Activated CD4-positive, alpha-beta memory T cell treated with anti-CD3 and anti-CD28 coated beads for 36 hours (primary cell): ENCODE measurements at regions of chr6 and their contacts with region 1.

Region 1: DNA sequence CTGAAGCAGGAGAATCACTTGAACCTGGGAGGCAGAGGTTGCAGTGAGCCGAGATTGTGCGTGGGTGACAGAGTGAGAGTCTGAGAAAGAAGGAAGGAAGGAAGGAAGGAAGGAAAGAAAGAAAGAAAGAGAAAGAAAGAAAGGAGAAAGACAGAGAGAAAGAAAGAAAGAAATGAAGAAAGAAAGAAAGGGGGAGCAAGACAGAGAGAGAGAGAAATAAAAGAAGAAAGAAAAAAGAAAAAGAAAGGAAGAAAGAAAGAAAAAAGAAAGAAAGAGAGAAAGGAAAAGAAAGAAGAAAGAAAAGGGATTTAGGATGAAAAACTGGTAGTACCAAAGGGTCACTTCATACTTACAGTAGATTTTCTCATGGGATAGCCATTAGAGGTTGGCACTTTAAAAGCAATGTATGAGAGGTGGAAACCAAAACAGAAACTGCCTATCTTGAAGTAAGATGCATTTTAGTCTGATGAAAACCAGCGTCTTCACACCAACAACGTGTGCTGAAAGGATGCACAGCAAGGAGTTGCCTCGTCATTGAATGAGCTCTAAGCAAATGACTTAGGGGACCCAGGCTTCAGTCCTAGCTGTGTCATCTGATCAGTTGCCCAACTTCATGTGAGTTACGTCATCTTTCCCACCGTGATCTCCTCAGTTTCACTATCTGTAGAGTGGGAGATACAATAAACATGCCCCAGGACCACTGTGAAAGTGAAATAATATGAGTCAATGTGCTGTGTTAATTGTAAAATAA is 133.9 kb upstream of the NEDD9 start:
- DNase-seq: peak; percentile 72
- H3K4me3 Mint-ChIP-seq: peak overlapping the region; percentile 43
- H3K27ac Mint-ChIP-seq: peak overlapping the region; percentile 77
- H3K4me1 Mint-ChIP-seq: peaks cover 95% of the 10 kb centered on the region
- H3K27me3 Mint-ChIP-seq: no peaks in the 10 kb centered on the region

Region 2: DNA sequence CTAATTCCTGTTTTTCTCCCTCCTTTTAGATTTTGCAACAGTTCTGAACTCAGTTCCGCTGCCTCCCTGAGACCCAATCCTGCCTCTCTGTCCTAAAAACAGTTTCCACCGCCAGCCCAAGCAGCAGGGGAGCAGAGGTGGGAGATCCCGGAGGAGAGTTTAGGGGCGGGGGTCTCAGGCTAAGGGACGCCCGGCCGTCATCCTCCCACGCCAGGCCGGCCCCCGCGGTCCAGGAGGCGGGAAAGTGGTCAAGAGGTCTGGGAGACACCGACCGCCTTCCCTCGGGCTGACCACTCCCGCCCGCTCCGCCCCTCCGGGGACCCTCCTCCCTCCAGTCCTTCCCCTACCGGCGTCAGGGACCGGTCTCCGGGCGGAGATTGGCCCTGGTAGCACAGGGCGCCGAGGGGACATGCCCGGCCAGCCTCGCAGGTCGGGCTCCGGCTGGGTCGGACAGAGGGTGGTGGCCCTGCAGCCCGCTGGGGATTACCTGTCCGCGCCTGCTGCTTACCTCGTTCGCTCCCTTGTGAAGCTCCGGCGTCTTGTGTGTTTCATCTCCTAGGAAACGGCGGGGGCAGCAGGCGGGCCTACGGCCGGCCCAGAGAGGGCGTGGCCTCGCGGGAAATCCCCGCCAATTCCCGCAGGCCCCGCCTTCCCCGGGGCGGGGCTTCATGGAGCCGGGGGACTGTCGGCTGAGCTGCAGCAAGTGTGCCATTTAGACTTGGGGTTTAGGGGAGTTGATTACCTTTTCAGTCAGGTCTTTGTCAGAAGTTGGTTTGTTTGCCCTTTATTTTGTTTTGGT is 528.2 kb before region 1 on chr6 and contains the start of gene MAK:
- CTCF ChIA-PET with region 1: no interaction called
- POLR2A ChIA-PET with region 1: no interaction called
- intact Hi-C with region 1: loop called (anchors 5 kb)
- DNase-seq: peak; percentile 91
- H3K4me3 Mint-ChIP-seq: peak within 1 kb of the TSS; percentile 73
- H3K27ac Mint-ChIP-seq: peak within 1 kb of the TSS; percentile 98
- H3K4me1 Mint-ChIP-seq: peaks cover 31% of the 10 kb centered on the region
- H3K27me3 Mint-ChIP-seq: peaks cover 40% of the 10 kb centered on the region
- total RNA-seq, gene MAK: 0.87 to 1.1 TPM

Region 3: GRCh38 chr6:11218538-11219399 is 147.6 kb before region 1 on chr6:
- CTCF ChIA-PET with region 1: no interaction called
- POLR2A ChIA-PET with region 1: no interaction called
- intact Hi-C with region 1: no loop called
- DNase-seq: peak; percentile 55
- H3K4me3 Mint-ChIP-seq: no peak overlapping the region
- H3K27ac Mint-ChIP-seq: no peak overlapping the region
- H3K4me1 Mint-ChIP-seq: peaks cover 53% of the 10 kb centered on the region
- H3K27me3 Mint-ChIP-seq: no peaks in the 10 kb centered on the region

Region 4: DNA sequence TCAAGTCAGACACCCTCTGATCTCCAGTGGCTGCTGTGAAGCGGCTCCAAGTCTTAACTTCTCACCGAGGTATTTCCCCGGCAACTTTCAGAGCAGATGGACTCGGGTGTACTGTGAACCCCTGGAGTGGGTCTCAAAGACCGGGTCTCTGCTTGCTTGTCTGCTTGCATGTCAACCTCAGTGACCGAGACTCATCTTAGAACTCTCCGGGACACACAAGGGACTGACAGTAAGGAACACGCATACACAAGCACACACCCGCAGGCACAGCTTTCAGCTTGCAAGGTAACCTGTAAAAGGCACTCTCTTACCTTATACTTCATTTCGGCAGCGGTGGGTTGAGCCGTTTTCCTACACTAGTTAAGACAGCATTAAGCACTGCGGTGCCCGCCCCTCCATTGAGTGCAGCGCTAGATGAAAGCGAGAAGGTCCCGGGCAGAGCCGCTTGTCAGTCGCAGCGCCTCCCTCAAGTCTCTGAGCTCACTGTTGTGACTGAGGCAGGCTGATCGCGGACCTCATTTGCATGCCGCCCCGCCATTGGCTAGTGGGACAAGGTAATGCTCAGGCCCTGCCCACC is 134.1 kb before region 1 on chr6 and contains the start of gene NEDD9:
- CTCF ChIA-PET with region 1: interaction called, 3 read pairs
- POLR2A ChIA-PET with region 1: interaction called, 17 read pairs
- intact Hi-C with region 1: loop called (anchors 1 kb)
- DNase-seq: peak; percentile 98
- H3K4me3 Mint-ChIP-seq: peak within 1 kb of the TSS; percentile 81
- H3K27ac Mint-ChIP-seq: peak within 1 kb of the TSS; percentile 96
- H3K4me1 Mint-ChIP-seq: peaks cover 65% of the 10 kb centered on the region
- H3K27me3 Mint-ChIP-seq: no peaks in the 10 kb centered on the region
- total RNA-seq, gene NEDD9: 26.6 to 31.5 TPM

Region 5: DNA sequence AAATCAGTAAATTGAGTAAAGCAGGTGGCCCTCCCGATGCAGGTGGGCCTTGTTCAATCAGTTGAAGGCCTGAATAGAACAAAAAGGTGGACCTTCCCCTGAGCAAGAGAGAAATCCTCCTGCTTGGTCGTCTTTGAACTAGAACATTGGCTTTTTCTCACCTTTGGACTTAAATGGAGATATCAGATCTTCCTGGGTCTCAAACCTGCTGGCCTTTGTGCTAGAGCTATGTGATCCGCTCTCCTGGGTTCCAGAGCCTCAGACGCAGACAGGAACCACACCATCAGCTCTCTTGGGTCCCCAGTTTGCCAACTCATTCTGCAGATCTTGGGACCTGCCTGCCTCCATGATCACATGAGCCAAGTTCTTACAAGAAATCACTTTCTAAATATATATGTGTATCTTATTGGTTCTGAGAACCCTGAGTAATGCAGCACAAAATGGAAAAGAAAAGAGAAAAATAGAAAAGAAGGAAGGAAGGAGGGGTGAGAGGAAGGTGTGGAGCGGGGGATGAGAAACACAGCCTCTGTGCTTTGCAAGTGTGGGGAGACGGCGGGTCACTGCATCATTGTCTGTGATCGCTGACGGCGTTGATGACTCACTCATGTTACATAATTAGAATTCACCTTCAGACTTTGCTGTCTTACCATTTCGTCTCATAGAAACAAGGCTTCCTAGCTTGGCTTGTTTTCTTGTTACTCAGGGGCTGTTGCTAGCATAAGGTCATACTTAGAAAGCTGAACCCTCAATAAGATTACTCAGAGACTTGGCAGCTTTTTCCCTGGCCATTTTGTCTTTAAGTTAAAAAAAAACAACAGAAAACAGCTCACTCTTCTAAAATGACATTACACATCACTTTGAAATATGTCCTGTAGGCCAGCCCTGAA is 48.2 kb before region 1 on chr6:
- CTCF ChIA-PET with region 1: interaction called, 3 read pairs
- POLR2A ChIA-PET with region 1: interaction called, 3 read pairs
- intact Hi-C with region 1: loop called (anchors 1 kb)
- DNase-seq: peak; percentile 88
- H3K4me3 Mint-ChIP-seq: peak overlapping the region; percentile 14
- H3K27ac Mint-ChIP-seq: peak overlapping the region; percentile 92
- H3K4me1 Mint-ChIP-seq: peaks cover 63% of the 10 kb centered on the region
- H3K27me3 Mint-ChIP-seq: no peaks in the 10 kb centered on the region

Region 6: DNA sequence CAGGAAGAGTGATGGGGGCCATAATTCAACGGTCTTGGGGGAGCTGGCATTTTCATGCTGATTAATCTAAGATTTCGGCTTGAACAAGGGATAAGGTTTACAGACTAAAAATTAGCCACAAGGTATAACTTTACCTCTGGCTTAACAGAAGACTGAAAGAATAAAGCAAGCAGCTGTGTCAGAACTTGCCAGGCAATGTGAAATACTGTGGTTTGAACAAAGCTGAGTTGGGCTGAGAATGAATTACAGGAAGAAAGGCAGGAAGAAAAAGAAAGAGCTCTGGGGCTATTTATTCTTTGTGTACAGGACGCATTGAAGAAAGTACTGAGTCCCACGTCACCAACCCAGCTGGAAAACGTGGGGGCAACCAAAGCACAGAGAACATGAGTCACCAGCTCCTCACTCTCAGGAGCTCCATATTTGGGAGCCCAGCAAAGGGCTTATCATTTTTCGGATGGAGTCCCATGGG is 12.4 kb before region 1 on chr6:
- CTCF ChIA-PET with region 1: interaction called, 9 read pairs
- POLR2A ChIA-PET with region 1: interaction called, 20 read pairs
- intact Hi-C with region 1: loop called (anchors 1 kb)
- DNase-seq: peak; percentile 89
- H3K4me3 Mint-ChIP-seq: peak overlapping the region; percentile 43
- H3K27ac Mint-ChIP-seq: peak overlapping the region; percentile 93
- H3K4me1 Mint-ChIP-seq: peaks cover 79% of the 10 kb centered on the region
- H3K27me3 Mint-ChIP-seq: no peaks in the 10 kb centered on the region

Region 7: GRCh38 chr6:11428351-11428750 is 62.0 kb after region 1 on chr6:
- CTCF ChIA-PET with region 1: no interaction called
- POLR2A ChIA-PET with region 1: no interaction called
- intact Hi-C with region 1: no loop called
- DNase-seq: no peak
- H3K4me3 Mint-ChIP-seq: no peak overlapping the region
- H3K27ac Mint-ChIP-seq: no peak overlapping the region
- H3K4me1 Mint-ChIP-seq: peaks cover 31% of the 10 kb centered on the region
- H3K27me3 Mint-ChIP-seq: no peaks in the 10 kb centered on the region

Region 8: GRCh38 chr6:11460001-11460668 is 93.8 kb after region 1 on chr6:
- CTCF ChIA-PET with region 1: no interaction called
- POLR2A ChIA-PET with region 1: interaction called, 3 read pairs
- intact Hi-C with region 1: loop called (anchors 2 kb)
- DNase-seq: peak; percentile 23
- H3K4me3 Mint-ChIP-seq: peak overlapping the region; percentile 57
- H3K27ac Mint-ChIP-seq: peak overlapping the region; percentile 90
- H3K4me1 Mint-ChIP-seq: peaks cover 31% of the 10 kb centered on the region
- H3K27me3 Mint-ChIP-seq: no peaks in the 10 kb centered on the region

Region 9: GRCh38 chr6:11711003-11711983 is 344.9 kb after region 1 on chr6:
- CTCF ChIA-PET with region 1: no interaction called
- POLR2A ChIA-PET with region 1: interaction called, 3 read pairs
- intact Hi-C with region 1: loop called (anchors 2 kb)
- DNase-seq: peak; percentile 83
- H3K4me3 Mint-ChIP-seq: peak overlapping the region; percentile 68
- H3K27ac Mint-ChIP-seq: peak overlapping the region; percentile 97
- H3K4me1 Mint-ChIP-seq: peaks cover 72% of the 10 kb centered on the region
- H3K27me3 Mint-ChIP-seq: no peaks in the 10 kb centered on the region